Activated CD4-positive, alpha-beta memory T cell treated with anti-CD3 and anti-CD28 coated beads for 36 hours (primary cell): ENCODE measurements at regions of chr20 and their contacts with region 1.

Region 1: GRCh38 chr20:50484276-50484976 is 25.8 kb upstream of the PTPN1 start:
- DNase-seq: no peak
- H3K4me3 Mint-ChIP-seq: peak overlapping the region; percentile 82
- H3K27ac Mint-ChIP-seq: peak overlapping the region; percentile 93
- H3K4me1 Mint-ChIP-seq: peaks cover 38% of the 10 kb centered on the region
- H3K27me3 Mint-ChIP-seq: no peaks in the 10 kb centered on the region

Region 2: DNA sequence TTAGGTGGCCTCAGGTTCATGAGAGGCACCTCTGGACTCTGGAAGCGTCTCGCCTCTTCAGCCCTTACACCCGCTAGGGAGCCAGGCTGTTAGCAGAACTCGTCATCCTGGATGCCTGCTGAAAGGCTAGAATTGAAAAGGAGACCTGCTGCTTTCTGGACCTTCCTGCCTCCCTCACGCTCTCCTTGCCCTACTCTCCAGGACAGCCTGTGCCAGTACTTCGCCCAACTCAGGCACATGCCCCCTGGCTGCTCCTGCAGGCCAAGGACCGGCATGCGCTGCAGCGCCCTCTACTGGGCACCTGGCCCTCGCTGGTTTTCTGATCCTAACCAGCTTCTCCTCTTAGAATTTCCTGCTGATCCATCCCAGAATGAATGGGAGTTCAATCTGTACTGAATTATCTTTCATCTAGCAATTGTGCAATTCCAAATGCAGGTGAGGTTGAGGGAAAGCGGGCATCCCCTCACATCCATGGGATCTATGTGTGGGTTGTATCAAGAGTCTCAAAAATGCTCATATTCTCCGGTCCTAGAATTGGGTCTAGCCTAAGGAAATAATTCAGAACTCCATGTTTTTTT is 103.7 kb after region 1 on chr20:
- CTCF ChIA-PET with region 1: interaction called, 13 read pairs
- POLR2A ChIA-PET with region 1: no interaction called
- intact Hi-C with region 1: no loop called
- DNase-seq: peak; percentile 84
- H3K4me3 Mint-ChIP-seq: no peak overlapping the region
- H3K27ac Mint-ChIP-seq: no peak overlapping the region
- H3K4me1 Mint-ChIP-seq: peaks cover 3% of the 10 kb centered on the region
- H3K27me3 Mint-ChIP-seq: no peaks in the 10 kb centered on the region

Region 3: GRCh38 chr20:50731055-50731871 is 246.8 kb after region 1 on chr20 and contains the start of gene PARD6B:
- CTCF ChIA-PET with region 1: no interaction called
- POLR2A ChIA-PET with region 1: no interaction called
- intact Hi-C with region 1: loop called (anchors 10 kb)
- DNase-seq: peak; percentile 100
- H3K4me3 Mint-ChIP-seq: peak within 1 kb of the TSS; percentile 87
- H3K27ac Mint-ChIP-seq: peak within 1 kb of the TSS; percentile 65
- H3K4me1 Mint-ChIP-seq: peaks cover 59% of the 10 kb centered on the region
- H3K27me3 Mint-ChIP-seq: no peaks in the 10 kb centered on the region
- total RNA-seq, gene PARD6B: 6.3 to 8.2 TPM

Region 4: GRCh38 chr20:50834599-50835005 is 350.2 kb after region 1 on chr20:
- CTCF ChIA-PET with region 1: no interaction called
- POLR2A ChIA-PET with region 1: no interaction called
- intact Hi-C with region 1: no loop called
- DNase-seq: no peak
- H3K4me3 Mint-ChIP-seq: no peak overlapping the region
- H3K27ac Mint-ChIP-seq: no peak overlapping the region
- H3K4me1 Mint-ChIP-seq: peaks cover 10% of the 10 kb centered on the region
- H3K27me3 Mint-ChIP-seq: no peaks in the 10 kb centered on the region